ENCODE measurements at regions of chr22 and their contacts with region 1.

Region 1: DNA sequence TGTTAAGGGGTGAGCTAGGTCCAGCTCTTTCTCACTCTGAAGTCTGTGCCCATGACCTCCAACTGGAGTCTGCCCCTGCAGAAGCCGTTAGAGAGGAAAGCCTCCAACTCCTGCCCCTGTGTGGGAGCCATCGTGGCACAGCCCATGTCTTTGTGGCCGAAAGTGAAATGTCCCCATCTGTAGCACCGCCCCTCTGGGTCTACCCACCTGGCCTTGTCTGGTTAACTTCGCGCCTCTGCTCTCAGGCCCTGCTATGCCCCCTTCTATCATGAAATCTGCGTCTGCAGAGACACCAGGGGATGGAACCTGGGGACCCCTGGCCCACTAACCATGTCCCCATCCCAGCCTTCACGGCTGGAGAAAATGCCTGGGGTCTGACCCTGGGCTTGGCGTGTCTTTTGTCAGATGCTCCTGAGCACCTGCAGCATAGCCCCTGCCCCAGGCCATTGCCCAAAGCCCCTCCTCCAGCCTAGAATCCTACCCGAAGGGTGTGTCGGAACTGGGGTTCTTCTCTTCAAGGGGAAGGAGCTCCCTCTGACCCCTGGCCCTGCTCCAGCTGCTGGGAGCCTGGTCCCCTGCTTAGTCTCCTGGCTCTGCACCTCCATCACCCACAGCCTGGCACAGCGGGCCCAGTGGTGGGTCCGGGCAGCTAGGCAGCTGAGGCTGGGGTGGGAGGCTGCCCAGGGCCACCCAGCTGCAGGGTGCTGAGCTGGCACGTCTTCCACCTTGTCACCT is 35.8 kb upstream of the HMOX1 start:
- DNase-seq: no peak
- H3K4me3 ChIP-seq: no peak overlapping the region
- H3K27ac ChIP-seq: no peak overlapping the region
- H3K4me1 ChIP-seq: no peaks in the 10 kb centered on the region
- H3K27me3 ChIP-seq: no peaks in the 10 kb centered on the region
- CTCF ChIP-seq: no peak

Region 2: DNA sequence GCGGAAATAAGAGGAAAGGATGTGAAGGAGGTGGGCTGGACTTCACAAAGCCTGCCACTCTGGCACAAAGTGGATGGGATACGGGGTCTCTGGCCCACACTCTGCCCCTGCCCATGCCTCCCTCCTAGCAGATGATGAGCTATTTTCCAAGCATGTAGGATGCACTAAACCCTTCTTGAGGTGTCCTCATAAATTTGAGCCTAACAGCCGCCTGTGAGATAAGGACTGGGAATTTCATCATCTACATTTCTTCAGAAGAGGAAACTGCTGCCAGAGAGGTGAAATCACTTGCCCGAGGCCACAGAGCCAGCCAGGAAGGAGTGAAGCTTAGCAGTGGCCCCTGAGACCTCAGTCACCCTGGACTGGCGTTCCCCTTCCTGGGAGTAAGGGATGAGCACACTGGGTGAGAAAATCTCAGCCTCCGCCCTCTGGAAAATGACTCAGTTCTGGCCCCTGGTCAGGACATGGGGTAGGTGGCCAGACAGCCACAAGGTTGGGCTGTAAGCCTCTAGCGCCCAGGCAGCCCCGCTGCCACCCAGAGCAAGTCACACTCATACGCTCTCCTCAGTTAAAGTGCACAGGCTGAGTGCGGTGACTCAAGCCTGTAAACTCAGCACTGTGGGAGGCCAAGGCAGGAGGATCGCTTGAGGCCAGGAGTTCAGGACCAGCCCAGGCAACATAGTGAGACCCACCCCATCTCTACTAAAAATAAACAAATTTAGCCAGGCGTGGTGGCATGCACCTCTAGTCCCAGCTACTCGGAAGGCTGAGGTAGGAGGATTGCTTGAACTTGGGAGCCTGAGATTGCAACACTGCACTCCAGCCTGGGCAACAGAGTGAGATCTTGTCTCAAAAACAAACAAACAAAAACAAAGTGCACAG is 244.2 kb after region 1 on chr22:
- CTCF ChIA-PET with region 1: no interaction called
- dilution Hi-C with region 1: loop called (anchors 5 kb)
- in situ Hi-C with region 1: loop called (anchors 5 to 10 kb)
- intact Hi-C with region 1: no loop called
- DNase-seq: peak; percentile 96
- H3K4me3 ChIP-seq: no peak overlapping the region
- H3K27ac ChIP-seq: no peak overlapping the region
- H3K4me1 ChIP-seq: peaks cover 17% of the 10 kb centered on the region
- H3K27me3 ChIP-seq: no peaks in the 10 kb centered on the region
- CTCF ChIP-seq: peak in 1 of 2 donors; percentile 19

Region 3: GRCh38 chr22:35622191-35622913 is 277.2 kb after region 1 on chr22:
- CTCF ChIA-PET with region 1: no interaction called
- dilution Hi-C with region 1: loop called (anchors 5 kb)
- in situ Hi-C with region 1: no loop called
- intact Hi-C with region 1: loop called (anchors 1 kb)
- DNase-seq: no peak
- H3K4me3 ChIP-seq: no peak overlapping the region
- H3K27ac ChIP-seq: no peak overlapping the region
- H3K4me1 ChIP-seq: peaks cover 8% of the 10 kb centered on the region
- H3K27me3 ChIP-seq: no peaks in the 10 kb centered on the region
- CTCF ChIP-seq: no peak